ENCODE measurements at regions of chr3 and their contacts with region 1.

Region 1: DNA sequence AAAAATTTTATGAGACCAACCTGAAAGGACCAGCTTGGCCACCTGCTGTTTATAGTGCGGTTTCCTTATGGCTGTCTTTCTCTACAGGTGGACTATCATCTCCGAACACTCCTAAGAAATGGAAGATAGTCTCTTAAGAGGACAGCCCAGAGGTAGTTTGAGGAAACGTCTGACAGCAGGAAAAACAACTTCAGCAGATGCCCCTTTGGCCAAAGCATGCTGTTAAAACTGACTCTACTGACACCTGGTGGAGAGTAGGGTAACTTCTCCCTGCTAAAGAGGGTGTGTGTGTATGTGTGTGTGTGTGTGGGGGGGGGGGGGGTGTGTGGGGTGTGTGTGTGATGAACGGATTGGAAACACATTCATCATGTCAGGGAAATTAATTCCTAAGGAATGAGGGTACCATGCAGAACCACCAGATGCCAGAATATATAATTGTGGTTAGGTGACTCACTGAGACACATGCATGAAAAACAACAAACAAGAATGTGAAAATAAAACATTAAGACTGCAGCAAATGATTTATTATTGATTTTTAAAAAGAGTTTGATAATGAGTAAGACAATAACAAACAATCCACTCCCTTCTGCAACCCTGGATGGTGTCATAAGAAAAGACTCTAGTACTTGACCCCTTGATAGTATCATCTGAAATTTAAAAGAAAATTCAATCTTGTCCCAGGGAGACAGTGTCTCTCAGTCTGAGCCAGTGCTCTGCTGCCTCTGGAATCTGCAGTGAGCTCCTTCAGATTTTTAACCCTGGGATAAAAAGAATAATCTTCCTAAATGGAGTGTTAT is 256.5 kb downstream of the THRB start:
- DNase-seq: no peak
- H3K4me3 ChIP-seq: no peak overlapping the region
- H3K27ac ChIP-seq: peak overlapping the region; percentile 13 to 47 (median 40)
- H3K4me1 ChIP-seq: peaks cover 0 to 50% (median 37%) of the 10 kb centered on the region in 4 donors
- H3K27me3 ChIP-seq: no peaks in the 10 kb centered on the region
- CTCF ChIP-seq: peak; percentile 68 to 78 (median 74)
- EP300 ChIP-seq: no peak
- POLR2A ChIP-seq: no peak

Region 2: GRCh38 chr3:23999012-23999641 is 239.0 kb before region 1 on chr3:
- intact Hi-C with region 1: loop called (anchors 2 kb)
- DNase-seq: peak; percentile 80
- H3K4me3 ChIP-seq: no peak overlapping the region
- H3K27ac ChIP-seq: no peak overlapping the region
- H3K4me1 ChIP-seq: peaks cover 0 to 16% (median 13%) of the 10 kb centered on the region in 4 donors
- H3K27me3 ChIP-seq: no peaks in the 10 kb centered on the region
- CTCF ChIP-seq: peak; percentile 87 to 98 (median 94)
- EP300 ChIP-seq: no peak
- POLR2A ChIP-seq: no peak

Region 3: DNA sequence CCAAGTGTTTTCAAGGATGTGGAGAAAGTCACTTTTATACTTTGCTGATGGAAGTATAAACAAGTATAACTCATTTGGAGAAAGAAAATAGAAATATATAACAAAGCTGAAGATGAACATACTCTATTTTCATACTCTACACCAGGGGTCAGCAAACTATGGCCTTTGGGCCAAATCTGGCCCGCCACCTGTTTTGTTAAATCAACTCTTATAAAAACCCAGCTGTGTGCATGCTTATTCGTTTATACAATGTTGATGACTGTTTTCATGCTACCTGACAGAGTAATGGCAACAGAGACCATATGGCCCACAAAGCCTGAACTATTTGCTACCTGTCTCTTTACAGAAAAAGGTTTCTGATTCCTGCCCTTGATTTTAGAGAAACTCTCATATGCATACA is 169.1 kb before region 1 on chr3:
- intact Hi-C with region 1: loop called (anchors 2 kb)
- DNase-seq: peak; percentile 71
- H3K4me3 ChIP-seq: no peak overlapping the region
- H3K27ac ChIP-seq: no peak overlapping the region
- H3K4me1 ChIP-seq: peaks cover 0 to 8% (median 0%) of the 10 kb centered on the region in 4 donors
- H3K27me3 ChIP-seq: no peaks in the 10 kb centered on the region
- CTCF ChIP-seq: peak in 3 of 4 experiments; percentile 29 to 47 (median 42)
- EP300 ChIP-seq: no peak
- POLR2A ChIP-seq: no peak